Stomach (tissue), 19 donors: ENCODE measurements at regions of chr7 and their contacts with region 1.

Region 1: GRCh38 chr7:35537067-35538023 is 157.6 kb downstream of the HERPUD2 start:
- DNase-seq: peak; percentile 83 to 93
- H3K4me3 ChIP-seq: peak overlapping the region; percentile 41 to 54 (median 48)
- H3K27ac ChIP-seq: no peak overlapping the region
- H3K4me1 ChIP-seq: peaks cover 0 to 13% (median 9%) of the 10 kb centered on the region in 4 donors
- H3K27me3 ChIP-seq: peaks cover 0 to 8% (median 0%) of the 10 kb centered on the region in 3 donors
- CTCF ChIP-seq: peak in 5 of 7 experiments; percentile 85 to 89 (median 88)
- EP300 ChIP-seq: no peak
- POLR2A ChIP-seq: no peak

Region 2: DNA sequence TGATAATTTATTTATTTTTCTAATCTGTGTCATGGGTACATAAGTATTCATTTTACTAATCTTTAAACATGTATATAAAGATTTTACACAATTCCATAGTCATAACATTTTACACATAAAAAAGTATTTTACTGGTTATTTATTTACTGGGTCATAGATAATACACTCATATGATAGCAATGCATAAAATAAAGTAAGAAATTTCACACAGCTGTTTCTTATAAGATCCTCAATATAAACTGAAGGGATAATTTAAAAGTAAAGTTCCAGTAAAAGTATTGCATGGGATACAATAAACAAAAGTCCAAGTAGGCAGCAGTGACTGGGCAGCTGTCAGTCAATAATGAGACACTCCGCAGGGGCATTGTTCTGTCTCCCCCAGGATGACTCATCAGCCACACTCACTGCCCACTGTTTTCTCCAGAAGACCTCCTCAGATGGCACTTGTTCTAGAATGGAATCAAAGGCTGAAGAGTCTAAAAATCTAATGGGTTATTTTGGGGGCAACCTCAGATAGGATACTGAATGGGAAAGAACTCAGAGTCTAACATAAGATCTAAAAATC is 532.7 kb before region 1 on chr7:
- intact Hi-C with region 1: no loop called
- DNase-seq: no peak
- H3K4me3 ChIP-seq: no peak overlapping the region
- H3K27ac ChIP-seq: peak overlapping the region in 4 of 5 donors; percentile 46 to 79 (median 76)
- H3K4me1 ChIP-seq: peaks cover 0 to 23% (median 13%) of the 10 kb centered on the region in 4 donors
- H3K27me3 ChIP-seq: no peaks in the 10 kb centered on the region
- CTCF ChIP-seq: no peak
- EP300 ChIP-seq: no peak
- POLR2A ChIP-seq: no peak

Region 3: GRCh38 chr7:35185907-35186731 is 351.2 kb before region 1 on chr7:
- intact Hi-C with region 1: loop called (anchors 10 kb)
- DNase-seq: peak in 1 of 2 donors; percentile 70
- H3K4me3 ChIP-seq: peak overlapping the region; percentile 35 to 54 (median 46)
- H3K27ac ChIP-seq: no peak overlapping the region
- H3K4me1 ChIP-seq: peaks cover 13 to 17% (median 17%) of the 10 kb centered on the region in 4 donors
- H3K27me3 ChIP-seq: peaks cover 0 to 24% (median 20%) of the 10 kb centered on the region in 3 donors
- CTCF ChIP-seq: no peak
- EP300 ChIP-seq: no peak
- POLR2A ChIP-seq: no peak

Region 4: GRCh38 chr7:35676211-35676610 is 138.9 kb after region 1 on chr7:
- intact Hi-C with region 1: no loop called
- DNase-seq: no peak
- H3K4me3 ChIP-seq: no peak overlapping the region
- H3K27ac ChIP-seq: no peak overlapping the region
- H3K4me1 ChIP-seq: peaks cover 0 to 56% (median 30%) of the 10 kb centered on the region in 4 donors
- H3K27me3 ChIP-seq: no peaks in the 10 kb centered on the region
- CTCF ChIP-seq: no peak
- EP300 ChIP-seq: no peak
- POLR2A ChIP-seq: no peak

Region 5: DNA sequence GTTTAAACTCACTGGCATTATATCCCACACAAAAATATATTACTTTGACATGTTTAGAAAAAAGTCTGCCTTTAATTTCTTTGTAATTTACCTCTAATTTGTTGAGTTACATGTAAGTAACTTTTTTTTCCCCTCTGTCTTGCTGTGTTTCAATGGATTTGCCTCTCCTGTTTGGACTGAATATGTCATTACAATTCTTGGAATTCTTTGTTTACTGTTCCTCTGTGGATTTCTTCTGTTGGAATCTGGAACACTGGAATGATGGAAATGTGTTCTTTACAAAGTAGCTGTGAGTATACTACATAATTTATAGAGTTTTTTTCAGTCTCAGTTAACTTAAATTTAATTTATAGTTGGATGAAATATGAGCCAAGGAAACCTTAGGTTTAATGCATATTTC is 293.9 kb after region 1 on chr7:
- intact Hi-C with region 1: no loop called
- DNase-seq: peak in 1 of 2 donors; percentile 6
- H3K4me3 ChIP-seq: no peak overlapping the region
- H3K27ac ChIP-seq: no peak overlapping the region
- H3K4me1 ChIP-seq: peaks cover 6 to 63% (median 31%) of the 10 kb centered on the region in 4 donors
- H3K27me3 ChIP-seq: no peaks in the 10 kb centered on the region
- CTCF ChIP-seq: no peak
- EP300 ChIP-seq: no peak
- POLR2A ChIP-seq: no peak